ENCODE measurements at regions of chr14 and their contacts with region 1.

Region 1: GRCh38 chr14:45222485-45223262 is 30.3 kb downstream of the MIS18BP1 start:
- DNase-seq: no peak
- ATAC-seq: no peak
- H3K4me3 ChIP-seq: no peak overlapping the region
- H3K27ac ChIP-seq: no peak overlapping the region
- H3K4me1 ChIP-seq: no peaks in the 10 kb centered on the region
- H3K27me3 ChIP-seq: no peaks in the 10 kb centered on the region
- CTCF ChIP-seq: no peak

Region 2: DNA sequence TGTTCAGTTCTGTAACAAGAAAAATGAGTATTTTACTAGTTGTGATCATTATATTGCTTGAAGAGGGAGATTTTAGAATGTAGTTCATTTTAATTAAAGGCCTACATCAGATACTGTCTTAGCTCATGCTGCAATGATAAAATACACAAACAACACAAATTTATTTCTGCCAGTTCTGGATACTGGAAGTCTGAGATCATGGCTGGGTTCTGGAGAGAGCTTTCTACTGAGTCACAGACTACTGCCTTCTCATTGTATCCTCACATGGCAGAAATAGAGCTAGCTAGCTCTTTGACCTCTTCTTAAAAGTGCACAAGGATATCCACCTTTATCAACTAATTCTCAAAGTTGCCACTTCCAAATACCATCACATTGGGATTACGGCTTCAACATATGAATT is 23.4 kb before region 1 on chr14:
- intact Hi-C with region 1: loop called in 1 of 10 experiments (anchors 1 kb)
- DNase-seq: no peak
- ATAC-seq: no peak
- H3K4me3 ChIP-seq: no peak overlapping the region
- H3K27ac ChIP-seq: no peak overlapping the region
- H3K4me1 ChIP-seq: no peaks in the 10 kb centered on the region
- H3K27me3 ChIP-seq: no peaks in the 10 kb centered on the region
- CTCF ChIP-seq: no peak